ENCODE measurements at regions of chr6 and their contacts with region 1.

Region 1: GRCh38 chr6:166627033-166627874 is at the start of gene RPS6KA2:
- DNase-seq: peak; percentile 100
- ATAC-seq: peak; percentile 91
- H3K4me3 ChIP-seq: peak within 1 kb of the TSS; percentile 54 to 95 (median 70)
- H3K4me3 Mint-ChIP-seq: peak within 1 kb of the TSS; percentile 85
- H3K27ac ChIP-seq: peak within 1 kb of the TSS; percentile 37 to 44
- H3K27ac Mint-ChIP-seq: peak within 1 kb of the TSS; percentile 93
- H3K4me1 ChIP-seq: peaks cover 18 to 19% of the 10 kb centered on the region in 2 donors
- H3K4me1 Mint-ChIP-seq: peaks cover 27% of the 10 kb centered on the region
- H3K27me3 ChIP-seq: peaks cover 0 to 45% (median 21%) of the 10 kb centered on the region in 4 experiments
- H3K27me3 Mint-ChIP-seq: peaks cover 16% of the 10 kb centered on the region
- CTCF ChIP-seq: no peak
- total RNA-seq, gene RPS6KA2: 16.0 and 17.1 TPM in 2 replicates

Region 2: DNA sequence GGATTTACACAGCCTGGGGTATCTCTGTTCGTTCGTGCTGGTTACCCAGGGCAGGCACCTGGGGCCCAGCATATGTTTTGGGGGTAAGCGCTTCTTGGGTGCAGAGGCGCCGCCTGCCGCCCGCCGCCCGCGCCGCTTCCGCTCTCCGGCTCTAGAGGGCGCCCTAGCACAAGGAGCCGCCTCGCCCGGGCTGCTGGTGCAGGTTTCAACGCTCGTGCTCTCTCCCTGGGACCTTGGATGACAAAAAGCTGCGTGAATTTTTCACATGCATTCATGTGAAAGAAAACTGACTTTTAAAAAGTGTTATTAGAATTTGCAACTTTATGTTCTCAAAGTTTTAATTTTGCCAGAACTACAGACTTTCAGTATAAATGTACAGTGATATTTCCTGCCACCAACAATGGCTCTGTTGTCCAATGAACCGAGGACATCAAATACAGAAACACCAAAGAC is 351.5 kb before region 1 on chr6:
- CTCF ChIA-PET with region 1: no interaction called
- POLR2A ChIA-PET with region 1: no interaction called
- intact Hi-C with region 1: loop called (anchors 5 kb)
- DNase-seq: peak; percentile 82
- ATAC-seq: peak; percentile 89
- H3K4me3 ChIP-seq: no peak overlapping the region
- H3K4me3 Mint-ChIP-seq: no peak overlapping the region
- H3K27ac ChIP-seq: no peak overlapping the region
- H3K27ac Mint-ChIP-seq: no peak overlapping the region
- H3K4me1 ChIP-seq: peaks cover 0 to 8% of the 10 kb centered on the region in 2 donors
- H3K4me1 Mint-ChIP-seq: peaks cover 14% of the 10 kb centered on the region
- H3K27me3 ChIP-seq: no peaks in the 10 kb centered on the region
- H3K27me3 Mint-ChIP-seq: peaks cover 2% of the 10 kb centered on the region
- CTCF ChIP-seq: peak; percentile 100

Region 3: DNA sequence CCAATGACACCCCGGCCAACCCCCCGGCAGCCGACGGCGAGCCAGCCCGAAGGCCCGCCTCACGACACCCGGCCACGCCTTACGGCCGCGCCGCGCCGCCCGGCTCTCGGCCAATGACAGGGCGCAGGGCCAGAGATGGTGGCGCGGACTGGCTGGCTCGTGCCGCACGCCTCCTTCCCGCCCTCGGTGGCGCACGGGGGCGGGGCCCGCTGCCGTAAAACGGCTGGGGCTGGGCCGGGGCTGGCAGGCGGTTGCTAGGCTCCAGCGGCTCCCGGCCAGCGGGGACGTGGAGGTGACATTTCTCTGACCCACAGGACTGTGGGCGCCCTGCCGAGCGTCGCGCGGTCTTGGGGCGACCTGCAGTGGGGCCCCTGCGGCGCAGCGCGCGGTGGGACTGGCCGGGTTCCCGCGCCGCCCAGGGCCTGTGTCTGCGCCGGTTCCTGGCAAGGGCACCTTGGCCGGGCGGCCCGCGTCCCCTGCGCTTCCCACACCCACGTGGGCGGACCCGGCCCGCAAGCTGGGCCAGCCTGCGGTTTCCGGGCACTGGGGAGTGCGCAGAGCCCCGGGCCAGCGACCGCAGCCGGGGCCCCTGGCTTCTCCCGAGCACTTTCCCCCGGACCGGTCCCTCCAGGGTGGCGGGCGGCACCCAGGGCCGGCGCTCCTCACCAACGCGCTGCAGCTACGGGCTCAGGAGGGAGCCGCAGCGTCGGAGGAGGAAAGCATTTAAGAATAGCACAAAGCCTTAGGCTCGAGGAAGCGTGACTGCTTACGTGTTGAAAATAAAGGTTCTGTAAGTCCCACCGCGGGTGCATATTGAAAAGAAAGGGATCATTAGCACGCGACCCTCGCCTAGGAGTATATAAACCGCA is 244.1 kb before region 1 on chr6 and contains the start of gene MPC1:
- CTCF ChIA-PET with region 1: interaction called, 3 read pairs
- POLR2A ChIA-PET with region 1: no interaction called
- intact Hi-C with region 1: loop called (anchors 1 kb)
- DNase-seq: peak; percentile 95
- ATAC-seq: peak; percentile 93
- H3K4me3 ChIP-seq: peak within 1 kb of the TSS; percentile 70 to 95 (median 83)
- H3K4me3 Mint-ChIP-seq: peak within 1 kb of the TSS; percentile 97
- H3K27ac ChIP-seq: peak within 1 kb of the TSS; percentile 59 to 80
- H3K27ac Mint-ChIP-seq: peak within 1 kb of the TSS; percentile 90
- H3K4me1 ChIP-seq: peaks cover 7 to 11% of the 10 kb centered on the region in 2 donors
- H3K4me1 Mint-ChIP-seq: peaks cover 15% of the 10 kb centered on the region
- H3K27me3 ChIP-seq: no peaks in the 10 kb centered on the region
- H3K27me3 Mint-ChIP-seq: no peaks in the 10 kb centered on the region
- CTCF ChIP-seq: no peak
- total RNA-seq, gene MPC1: 19.6 and 23.9 TPM in 2 replicates

Region 4: DNA sequence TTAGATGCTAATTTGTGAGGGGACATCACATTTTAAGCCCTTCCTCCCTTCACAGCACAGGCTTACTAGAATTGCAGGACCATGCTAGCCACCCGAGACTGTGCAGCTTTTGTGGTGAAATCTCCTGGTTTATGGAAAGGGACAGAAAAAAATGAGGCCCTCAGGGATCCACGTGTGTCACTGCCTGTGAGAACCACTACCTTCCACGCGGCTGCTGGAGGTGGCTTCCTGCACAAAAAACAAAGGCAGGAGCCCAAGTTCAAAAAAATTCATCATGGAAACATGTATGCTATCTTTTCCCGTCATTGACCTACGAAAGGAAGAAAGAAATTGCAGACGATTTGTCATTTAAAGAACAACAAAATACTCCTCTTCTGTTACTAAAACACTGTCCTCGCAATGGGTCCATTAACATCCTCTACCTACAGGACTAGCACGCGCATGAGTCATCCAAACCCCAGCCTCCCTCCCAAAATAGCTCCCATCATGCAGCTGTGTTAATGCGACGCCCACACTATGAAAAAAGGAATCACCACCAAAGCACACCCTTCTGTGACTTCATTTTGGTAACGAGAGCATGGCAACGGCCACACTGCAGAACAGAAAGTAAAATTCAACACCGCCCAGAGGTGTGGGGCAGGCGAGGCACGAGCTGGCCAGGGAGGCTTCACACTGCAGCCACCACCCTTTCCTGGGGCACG is 86.5 kb before region 1 on chr6:
- CTCF ChIA-PET with region 1: no interaction called
- POLR2A ChIA-PET with region 1: no interaction called
- intact Hi-C with region 1: loop called (anchors 1 kb)
- DNase-seq: peak; percentile 59
- ATAC-seq: peak; percentile 85
- H3K4me3 ChIP-seq: peak overlapping the region in 4 of 5 experiments; percentile 25 to 55 (median 42)
- H3K4me3 Mint-ChIP-seq: peak overlapping the region; percentile 83
- H3K27ac ChIP-seq: peak overlapping the region; percentile 59 to 73
- H3K27ac Mint-ChIP-seq: peak overlapping the region; percentile 90
- H3K4me1 ChIP-seq: peaks cover 5 to 18% of the 10 kb centered on the region in 2 donors
- H3K4me1 Mint-ChIP-seq: peaks cover 22% of the 10 kb centered on the region
- H3K27me3 ChIP-seq: no peaks in the 10 kb centered on the region
- H3K27me3 Mint-ChIP-seq: no peaks in the 10 kb centered on the region
- CTCF ChIP-seq: no peak

Region 5: DNA sequence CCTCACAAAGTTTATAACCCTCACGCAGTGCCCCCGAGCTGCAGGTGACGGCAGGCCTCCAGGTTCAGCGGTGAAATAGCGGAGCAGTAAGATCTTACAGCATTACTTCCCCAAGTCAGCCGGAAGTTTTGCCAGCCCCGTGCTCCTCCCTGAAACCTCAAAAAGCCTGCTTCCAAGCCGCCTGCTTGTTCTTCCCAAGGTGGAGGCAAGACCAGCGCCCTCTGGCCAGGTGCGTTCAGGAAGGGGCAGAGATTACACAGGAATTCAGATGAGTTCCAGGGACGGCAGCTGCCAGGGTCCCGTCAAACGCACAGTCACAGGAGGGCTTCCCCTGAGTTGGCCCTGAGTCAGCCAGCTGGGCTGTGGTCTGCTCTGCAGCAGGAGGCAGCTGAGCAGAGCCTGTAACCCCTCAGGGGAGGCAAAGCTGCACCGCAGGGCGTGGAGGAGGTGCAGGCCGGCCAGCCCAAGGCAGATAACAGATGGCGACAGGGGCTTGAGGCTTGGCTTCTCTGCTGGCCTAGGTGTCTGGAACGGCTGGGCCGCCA is 123.9 kb after region 1 on chr6:
- CTCF ChIA-PET with region 1: interaction called, 3 read pairs
- POLR2A ChIA-PET with region 1: no interaction called
- intact Hi-C with region 1: loop called (anchors 10 kb)
- DNase-seq: peak; percentile 73
- ATAC-seq: peak; percentile 98
- H3K4me3 ChIP-seq: peak overlapping the region in 4 of 5 experiments; percentile 33 to 83 (median 59)
- H3K4me3 Mint-ChIP-seq: peak overlapping the region; percentile 93
- H3K27ac ChIP-seq: peak overlapping the region; percentile 21 to 54
- H3K27ac Mint-ChIP-seq: peak overlapping the region; percentile 84
- H3K4me1 ChIP-seq: peaks cover 26 to 34% of the 10 kb centered on the region in 2 donors
- H3K4me1 Mint-ChIP-seq: peaks cover 26% of the 10 kb centered on the region
- H3K27me3 ChIP-seq: peaks cover 0 to 28% (median 7%) of the 10 kb centered on the region in 4 experiments
- H3K27me3 Mint-ChIP-seq: peaks cover 15% of the 10 kb centered on the region
- CTCF ChIP-seq: no peak

Region 6: DNA sequence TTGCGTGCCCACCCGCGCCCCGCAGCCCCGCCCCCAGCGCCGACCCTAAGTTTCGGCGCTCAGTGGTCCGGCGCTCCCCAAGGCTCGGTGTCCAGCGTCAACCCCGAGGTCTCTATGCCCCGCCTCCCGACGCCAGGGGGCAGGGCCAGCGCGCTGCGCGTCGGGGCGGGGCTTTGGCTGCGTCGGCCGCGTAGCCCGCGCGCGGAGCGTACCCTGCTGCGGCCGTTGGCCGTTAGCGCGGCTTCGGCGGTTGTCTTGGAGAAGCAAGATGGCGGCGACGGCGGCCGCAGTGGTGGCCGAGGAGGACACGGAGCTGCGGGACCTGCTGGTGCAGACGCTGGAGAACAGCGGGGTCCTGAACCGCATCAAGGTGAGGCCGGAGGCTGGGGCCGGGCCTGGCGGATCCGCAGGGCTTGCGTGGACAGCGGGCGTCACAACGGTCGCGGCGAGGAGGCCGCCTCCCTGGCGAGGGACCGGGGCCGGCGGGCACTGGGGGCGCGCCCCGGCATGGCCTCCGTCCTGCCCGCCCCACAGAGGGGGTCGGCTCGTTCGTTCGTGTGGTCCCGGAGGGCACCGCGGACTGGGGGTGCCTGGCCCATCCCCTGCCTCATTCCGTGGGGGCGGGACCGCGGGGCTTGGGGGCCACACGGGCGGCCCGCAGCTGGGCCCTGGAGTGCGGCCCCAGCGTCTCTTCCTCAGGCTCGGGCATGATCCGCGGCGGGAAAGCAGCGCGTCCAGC is 372.1 kb after region 1 on chr6 and contains the start of gene CEP43:
- CTCF ChIA-PET with region 1: no interaction called
- POLR2A ChIA-PET with region 1: no interaction called
- intact Hi-C with region 1: loop called (anchors 1 kb)
- DNase-seq: peak; percentile 98
- ATAC-seq: peak; percentile 95
- H3K4me3 ChIP-seq: peak within 1 kb of the TSS; percentile 70 to 95 (median 91)
- H3K4me3 Mint-ChIP-seq: peak within 1 kb of the TSS; percentile 91
- H3K27ac ChIP-seq: peak within 1 kb of the TSS; percentile 31 to 83
- H3K27ac Mint-ChIP-seq: peak within 1 kb of the TSS; percentile 86
- H3K4me1 ChIP-seq: peaks cover 21 to 23% of the 10 kb centered on the region in 2 donors
- H3K4me1 Mint-ChIP-seq: peaks cover 29% of the 10 kb centered on the region
- H3K27me3 ChIP-seq: no peaks in the 10 kb centered on the region
- H3K27me3 Mint-ChIP-seq: no peaks in the 10 kb centered on the region
- CTCF ChIP-seq: no peak
- total RNA-seq, gene CEP43: 33.7 and 39.7 TPM in 2 replicates

Region 7: GRCh38 chr6:167153521-167153959 is 526.3 kb after region 1 on chr6:
- CTCF ChIA-PET with region 1: no interaction called
- POLR2A ChIA-PET with region 1: no interaction called
- intact Hi-C with region 1: loop called (anchors 10 kb)
- DNase-seq: peak; percentile 77
- ATAC-seq: peak; percentile 65
- H3K4me3 ChIP-seq: peak overlapping the region in 4 of 5 experiments; percentile 15 to 52 (median 37)
- H3K4me3 Mint-ChIP-seq: peak overlapping the region; percentile 86
- H3K27ac ChIP-seq: peak overlapping the region; percentile 72 to 83
- H3K27ac Mint-ChIP-seq: peak overlapping the region; percentile 89
- H3K4me1 ChIP-seq: peaks cover 44 to 55% of the 10 kb centered on the region in 2 donors
- H3K4me1 Mint-ChIP-seq: peaks cover 60% of the 10 kb centered on the region
- H3K27me3 ChIP-seq: no peaks in the 10 kb centered on the region
- H3K27me3 Mint-ChIP-seq: no peaks in the 10 kb centered on the region
- CTCF ChIP-seq: no peak

Region 8: DNA sequence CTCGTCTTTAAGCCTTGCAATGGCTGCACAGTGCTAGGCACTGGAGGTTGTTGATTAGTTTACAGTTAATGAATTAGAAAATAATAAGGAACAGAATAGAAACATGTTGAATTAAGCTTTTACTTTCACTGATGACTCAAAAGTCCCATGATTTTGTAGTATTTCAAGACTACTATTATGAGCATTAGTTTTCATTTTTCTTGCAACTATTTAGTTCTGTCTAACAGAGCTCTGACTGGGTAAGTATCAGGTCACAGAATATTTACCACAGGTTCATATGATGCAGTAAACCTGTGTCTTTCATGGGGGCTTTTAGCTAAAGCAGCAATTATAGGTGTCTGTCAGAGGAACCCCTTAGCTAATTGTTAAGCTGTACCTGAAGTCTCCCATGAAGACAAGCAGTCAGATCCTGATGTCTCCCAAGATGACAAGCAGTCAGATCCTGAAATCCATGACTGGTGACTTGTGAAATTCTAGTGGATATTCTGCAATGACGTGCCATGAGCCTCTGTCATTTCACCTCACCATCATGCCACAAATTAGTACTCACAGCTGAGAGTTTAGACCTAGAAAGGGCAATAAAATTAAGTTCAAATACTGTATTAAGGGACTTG is 538.7 kb after region 1 on chr6:
- CTCF ChIA-PET with region 1: no interaction called
- POLR2A ChIA-PET with region 1: no interaction called
- intact Hi-C with region 1: no loop called
- DNase-seq: no peak
- ATAC-seq: no peak
- H3K4me3 ChIP-seq: no peak overlapping the region
- H3K4me3 Mint-ChIP-seq: no peak overlapping the region
- H3K27ac ChIP-seq: no peak overlapping the region
- H3K27ac Mint-ChIP-seq: no peak overlapping the region
- H3K4me1 ChIP-seq: peaks cover 0 to 3% of the 10 kb centered on the region in 2 donors
- H3K4me1 Mint-ChIP-seq: peaks cover 8% of the 10 kb centered on the region
- H3K27me3 ChIP-seq: peaks cover 0 to 4% (median 0%) of the 10 kb centered on the region in 4 experiments
- H3K27me3 Mint-ChIP-seq: peaks cover 4% of the 10 kb centered on the region
- CTCF ChIP-seq: no peak

Measured in B cell (primary cell).